ENCODE measurements at regions of chr11 and their contacts with region 1.

Region 1: GRCh38 chr11:67630228-67630942 is 648 bp upstream of the NUDT8 start:
- DNase-seq: peak; percentile 99
- ATAC-seq: peak; percentile 89 to 92 (median 91)
- H3K4me3 ChIP-seq: peak overlapping the region; percentile 15 to 82 (median 66)
- H3K27ac ChIP-seq: peak overlapping the region; percentile 58 to 98 (median 92)
- H3K4me1 ChIP-seq: peaks cover 0 to 32% (median 14%) of the 10 kb centered on the region in 12 donors
- H3K27me3 ChIP-seq: no peaks in the 10 kb centered on the region
- CTCF ChIP-seq: peak; percentile 52 to 82 (median 66)
- POLR2A ChIP-seq: peak in 1 of 2 donors; percentile 89

Region 2: GRCh38 chr11:67583247-67584204 is 46.9 kb before region 1 on chr11 and contains the start of gene GSTP1:
- intact Hi-C with region 1: loop called in 1 of 10 experiments (anchors 1 kb)
- DNase-seq: peak; percentile 93 to 96 (median 95)
- ATAC-seq: peak; percentile 92 to 97 (median 97)
- H3K4me3 ChIP-seq: peak within 1 kb of the TSS; percentile 49 to 97 (median 81)
- H3K27ac ChIP-seq: peak within 1 kb of the TSS; percentile 93 to 100 (median 99)
- H3K4me1 ChIP-seq: peaks cover 0 to 57% (median 12%) of the 10 kb centered on the region in 12 donors
- H3K27me3 ChIP-seq: no peaks in the 10 kb centered on the region
- CTCF ChIP-seq: peak; percentile 56 to 92 (median 86)
- POLR2A ChIP-seq: peak; percentile 78 to 97
- total RNA-seq, gene GSTP1: 294 to 830 (median 341) TPM

Region 3: GRCh38 chr11:67656278-67656922 is 26.0 kb after region 1 on chr11:
- intact Hi-C with region 1: loop called in 1 of 10 experiments (anchors 2 kb)
- DNase-seq: peak in 1 of 5 donors; percentile 3
- ATAC-seq: no peak
- H3K4me3 ChIP-seq: no peak overlapping the region
- H3K27ac ChIP-seq: no peak overlapping the region
- H3K4me1 ChIP-seq: no peaks in the 10 kb centered on the region
- H3K27me3 ChIP-seq: no peaks in the 10 kb centered on the region
- CTCF ChIP-seq: no peak
- POLR2A ChIP-seq: no peak